PC-3 (cell line): ENCODE measurements at regions of chr2 and their contacts with region 1.

Region 1: GRCh38 chr2:3518496-3519254 is 656 bp downstream of the ADI1 start:
- DNase-seq: peak; percentile 97
- ATAC-seq: peak; percentile 75
- H3K4me3 ChIP-seq: peak overlapping the region; percentile 73
- H3K27ac ChIP-seq: peak overlapping the region; percentile 77
- H3K4me1 ChIP-seq: peaks cover 34% of the 10 kb centered on the region
- H3K27me3 ChIP-seq: no peaks in the 10 kb centered on the region
- CTCF ChIP-seq: no peak

Region 2: GRCh38 chr2:3277470-3278255 is 241.0 kb before region 1 on chr2:
- CTCF ChIA-PET with region 1: no interaction called
- POLR2A ChIA-PET with region 1: no interaction called
- intact Hi-C with region 1: no loop called
- DNase-seq: no peak
- ATAC-seq: no peak
- H3K4me3 ChIP-seq: no peak overlapping the region
- H3K27ac ChIP-seq: no peak overlapping the region
- H3K4me1 ChIP-seq: peaks cover 6% of the 10 kb centered on the region; the same call in 1 of the 2 replicates
- H3K27me3 ChIP-seq: no peaks in the 10 kb centered on the region
- CTCF ChIP-seq: no peak

Region 3: DNA sequence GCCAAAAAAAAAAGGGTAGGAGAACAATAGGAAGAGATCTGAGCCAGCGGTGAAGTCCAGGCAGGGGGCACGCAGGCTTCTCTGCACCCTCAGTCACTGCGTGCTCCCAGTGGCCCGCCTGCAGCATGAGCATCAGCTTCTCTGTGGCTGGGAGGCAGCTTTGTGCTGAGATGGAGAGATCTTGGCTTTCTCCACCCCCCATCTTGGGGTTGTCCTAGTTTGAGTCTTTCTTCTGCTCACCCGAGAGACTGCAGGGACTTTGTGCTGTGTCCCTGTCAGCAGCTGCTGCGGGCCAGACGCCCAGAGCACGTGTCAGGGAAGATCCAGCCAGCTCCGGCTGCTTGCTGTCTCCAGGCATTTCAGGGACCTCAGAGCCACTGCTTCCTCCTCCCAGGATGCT is 118.8 kb before region 1 on chr2:
- CTCF ChIA-PET with region 1: no interaction called
- POLR2A ChIA-PET with region 1: interaction called, 15 read pairs
- intact Hi-C with region 1: no loop called
- DNase-seq: no peak
- ATAC-seq: no peak
- H3K4me3 ChIP-seq: no peak overlapping the region
- H3K27ac ChIP-seq: no peak overlapping the region
- H3K4me1 ChIP-seq: no peaks in the 10 kb centered on the region
- H3K27me3 ChIP-seq: no peaks in the 10 kb centered on the region
- CTCF ChIP-seq: no peak

Region 4: DNA sequence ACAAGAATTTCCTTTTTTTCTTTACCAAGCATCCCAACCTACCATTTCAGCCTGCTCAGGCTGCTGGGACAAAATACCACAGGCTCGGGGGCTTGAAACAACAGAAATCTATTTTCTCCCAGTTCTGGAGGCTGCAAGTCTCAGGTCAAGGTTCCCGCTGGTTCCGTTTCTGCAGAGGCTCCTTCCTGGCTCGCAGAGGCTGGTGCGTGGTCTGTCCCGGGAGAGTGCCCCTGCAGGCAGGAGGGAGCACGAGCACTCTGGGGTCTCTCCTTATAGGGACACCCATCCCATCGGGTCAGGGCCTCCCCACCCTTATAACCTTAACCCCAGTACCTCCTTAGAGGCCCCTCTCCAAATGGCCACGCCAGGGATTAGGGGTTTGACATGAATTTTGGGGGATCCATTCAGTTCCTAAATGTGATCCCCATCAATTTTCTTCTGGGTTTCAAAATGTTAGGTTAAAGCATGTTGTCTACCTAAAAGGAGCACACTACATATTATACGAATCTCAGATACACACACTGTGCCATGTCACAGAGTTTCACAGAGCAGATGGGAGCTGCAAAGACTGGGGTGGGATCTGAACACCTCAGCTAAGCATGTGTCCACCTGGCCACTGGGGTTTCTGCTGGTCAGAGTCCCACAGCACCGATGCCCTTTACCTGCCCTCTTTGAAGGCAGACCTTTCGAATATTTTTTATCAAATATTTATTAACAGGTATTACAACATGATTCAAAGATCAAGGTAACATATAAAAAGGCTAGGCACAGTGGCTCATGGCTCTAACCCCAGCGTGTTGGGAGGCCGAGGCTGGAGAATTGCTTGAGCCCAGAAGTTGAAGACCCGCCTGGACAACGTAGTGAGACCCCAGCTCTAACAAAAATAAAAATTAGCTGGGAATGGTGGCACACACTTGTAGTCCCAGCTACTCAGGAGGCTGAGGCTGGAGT is 18.3 kb after region 1 on chr2:
- CTCF ChIA-PET with region 1: interaction called, 4 read pairs
- POLR2A ChIA-PET with region 1: interaction called, 6 read pairs
- intact Hi-C with region 1: loop called (anchors 1 kb)
- DNase-seq: peak; percentile 37
- ATAC-seq: peak; percentile 32
- H3K4me3 ChIP-seq: peak overlapping the region; percentile 54
- H3K27ac ChIP-seq: peak overlapping the region; percentile 95
- H3K4me1 ChIP-seq: peaks cover 26% of the 10 kb centered on the region
- H3K27me3 ChIP-seq: no peaks in the 10 kb centered on the region
- CTCF ChIP-seq: peak; percentile 57

Region 5: GRCh38 chr2:3575534-3576262 is 57.0 kb after region 1 on chr2:
- CTCF ChIA-PET with region 1: no interaction called
- POLR2A ChIA-PET with region 1: interaction called, 3 read pairs
- intact Hi-C with region 1: loop called (anchors 5 kb)
- DNase-seq: no peak
- ATAC-seq: peak; percentile 21
- H3K4me3 ChIP-seq: peak overlapping the region; percentile 100
- H3K27ac ChIP-seq: peak overlapping the region; percentile 35
- H3K4me1 ChIP-seq: peaks cover 30% of the 10 kb centered on the region
- H3K27me3 ChIP-seq: no peaks in the 10 kb centered on the region
- CTCF ChIP-seq: no peak

Region 6: GRCh38 chr2:3672861-3673678 is 154.4 kb after region 1 on chr2:
- CTCF ChIA-PET with region 1: no interaction called
- POLR2A ChIA-PET with region 1: no interaction called
- intact Hi-C with region 1: no loop called
- DNase-seq: no peak
- ATAC-seq: no peak
- H3K4me3 ChIP-seq: no peak overlapping the region
- H3K27ac ChIP-seq: no peak overlapping the region
- H3K4me1 ChIP-seq: no peaks in the 10 kb centered on the region
- H3K27me3 ChIP-seq: peaks cover 25% of the 10 kb centered on the region
- CTCF ChIP-seq: no peak

Region 7: DNA sequence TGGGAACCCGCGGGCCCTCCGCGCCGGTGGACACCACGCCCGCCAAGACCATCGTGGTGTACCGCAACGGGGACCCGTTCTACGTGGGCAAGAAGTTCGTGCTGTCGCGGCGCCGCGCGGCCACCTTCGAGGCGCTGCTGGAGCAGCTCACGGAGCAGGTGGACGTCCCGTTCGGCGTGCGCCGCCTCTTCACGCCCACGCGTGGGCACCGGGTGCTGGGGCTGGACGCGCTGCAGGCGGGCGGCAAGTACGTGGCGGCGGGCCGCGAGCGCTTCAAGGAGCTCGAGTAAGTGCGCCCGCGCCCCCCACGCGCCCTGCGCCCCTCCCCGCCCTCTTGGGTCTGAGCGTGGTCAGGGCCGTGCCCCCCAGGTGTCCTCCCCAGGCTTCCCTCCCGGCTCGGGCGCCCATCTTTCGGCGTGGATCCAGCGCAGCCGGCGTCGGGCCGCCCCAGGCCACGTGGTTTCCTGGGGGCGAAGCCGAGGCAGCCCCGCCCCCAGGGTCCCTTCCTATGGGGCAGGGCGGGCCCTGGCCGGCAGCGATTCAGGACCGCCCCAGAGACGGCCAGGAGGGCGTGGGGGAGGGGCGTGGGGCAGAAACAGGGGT is 185.2 kb after region 1 on chr2:
- CTCF ChIA-PET with region 1: no interaction called
- POLR2A ChIA-PET with region 1: no interaction called
- intact Hi-C with region 1: no loop called
- DNase-seq: no peak
- ATAC-seq: no peak
- H3K4me3 ChIP-seq: no peak overlapping the region
- H3K27ac ChIP-seq: no peak overlapping the region
- H3K4me1 ChIP-seq: no peaks in the 10 kb centered on the region
- H3K27me3 ChIP-seq: peaks cover 40% of the 10 kb centered on the region
- CTCF ChIP-seq: no peak

Region 8: DNA sequence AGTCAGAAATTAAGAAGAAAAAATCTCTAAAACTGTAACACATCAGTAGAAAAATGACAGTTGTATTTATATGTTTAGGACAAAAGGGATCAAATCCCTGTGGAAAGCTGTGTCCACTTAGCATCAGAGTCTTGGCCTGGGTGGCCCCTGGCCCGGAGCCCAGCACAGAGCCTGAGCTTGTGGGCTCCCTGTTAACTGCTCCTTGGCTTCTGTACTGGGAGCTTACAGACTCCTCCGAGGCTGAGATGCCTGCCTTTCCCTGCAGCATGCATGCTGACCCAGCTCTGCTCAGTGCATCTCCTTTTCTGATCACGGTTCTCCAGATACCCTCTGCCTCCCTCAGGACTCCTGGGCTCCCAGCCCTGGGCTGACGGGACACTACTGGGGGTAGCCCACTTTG is 282.8 kb after region 1 on chr2:
- CTCF ChIA-PET with region 1: no interaction called
- POLR2A ChIA-PET with region 1: no interaction called
- intact Hi-C with region 1: no loop called
- DNase-seq: no peak
- ATAC-seq: no peak
- H3K4me3 ChIP-seq: no peak overlapping the region
- H3K27ac ChIP-seq: no peak overlapping the region
- H3K4me1 ChIP-seq: no peaks in the 10 kb centered on the region
- H3K27me3 ChIP-seq: peaks cover 10% of the 10 kb centered on the region; the same call in 1 of the 2 replicates
- CTCF ChIP-seq: no peak